ENCODE measurements at regions of chr14 and their contacts with region 1.

Region 1: GRCh38 chr14:69766984-69767368 is at the start of gene SRSF5:
- DNase-seq: peak; percentile 97
- H3K4me3 ChIP-seq: peak within 1 kb of the TSS; percentile 51 to 98 (median 96)
- H3K27ac ChIP-seq: peak within 1 kb of the TSS; percentile 99 to 100 (median 99)
- H3K4me1 ChIP-seq: peaks cover 15 to 22% of the 10 kb centered on the region in 2 donors
- H3K27me3 ChIP-seq: no peaks in the 10 kb centered on the region
- CTCF ChIP-seq: no peak
- POLR2A ChIP-seq: peak; percentile 97 to 99
- total RNA-seq, gene SRSF5: 326 to 969 (median 539) TPM

Region 2: DNA sequence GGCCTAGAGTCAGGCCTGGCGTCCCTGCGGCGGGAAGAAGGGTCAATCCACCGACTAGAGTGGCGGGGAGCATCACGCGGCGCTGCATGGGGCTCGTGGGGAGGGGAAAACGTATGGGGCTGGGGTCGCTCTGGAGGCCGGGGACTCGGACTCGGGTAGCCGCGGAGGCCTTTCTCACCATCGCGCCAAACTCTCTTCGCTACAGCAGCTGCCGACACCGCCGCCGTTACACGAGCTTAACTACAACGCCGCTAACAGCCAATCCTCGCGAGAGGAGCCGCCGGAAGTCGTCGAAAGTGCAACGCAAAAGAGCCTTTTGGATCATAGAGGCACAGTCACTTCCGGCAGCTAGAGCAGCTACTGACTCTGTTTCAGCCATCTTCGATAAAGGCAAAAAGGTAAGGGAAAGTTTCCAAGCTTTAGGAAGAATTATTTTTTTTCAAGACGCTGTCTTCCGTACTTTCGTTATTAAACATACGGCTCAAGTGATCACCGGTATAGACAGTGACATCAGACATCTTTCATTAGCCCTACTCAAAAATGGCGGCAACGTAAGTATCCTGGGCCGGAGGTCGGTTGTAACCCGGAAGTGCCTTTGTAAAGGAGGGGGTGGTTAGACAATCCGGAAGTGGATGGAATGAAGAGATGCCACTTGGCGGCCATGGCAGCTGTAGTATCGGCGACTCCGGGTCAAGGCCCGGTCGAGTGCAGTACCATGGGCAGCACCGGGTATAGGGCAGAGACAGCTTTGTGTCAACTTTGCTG is 368.7 kb before region 1 on chr14 and contains the starts of genes ERH and SLC39A9:
- intact Hi-C with region 1: loop called (anchors 10 kb)
- DNase-seq: peak; percentile 96
- H3K4me3 ChIP-seq: peak within 1 kb of the TSS; percentile 69 to 98 (median 96)
- H3K27ac ChIP-seq: peak within 1 kb of the TSS; percentile 69 to 84 (median 84)
- H3K4me1 ChIP-seq: peaks cover 38 to 40% of the 10 kb centered on the region in 2 donors
- H3K27me3 ChIP-seq: no peaks in the 10 kb centered on the region
- CTCF ChIP-seq: peak in 1 of 6 experiments; percentile 3
- POLR2A ChIP-seq: peak in 1 of 2 donors; percentile 65
- total RNA-seq, gene ERH: 52.6 to 88.0 (median 74.3) TPM
- total RNA-seq, gene SLC39A9: 64.9 to 101 (median 81.3) TPM

Measured in thyroid gland (tissue), 4 donors.